ENCODE measurements at regions of chr11 and their contacts with region 1.

Region 1: DNA sequence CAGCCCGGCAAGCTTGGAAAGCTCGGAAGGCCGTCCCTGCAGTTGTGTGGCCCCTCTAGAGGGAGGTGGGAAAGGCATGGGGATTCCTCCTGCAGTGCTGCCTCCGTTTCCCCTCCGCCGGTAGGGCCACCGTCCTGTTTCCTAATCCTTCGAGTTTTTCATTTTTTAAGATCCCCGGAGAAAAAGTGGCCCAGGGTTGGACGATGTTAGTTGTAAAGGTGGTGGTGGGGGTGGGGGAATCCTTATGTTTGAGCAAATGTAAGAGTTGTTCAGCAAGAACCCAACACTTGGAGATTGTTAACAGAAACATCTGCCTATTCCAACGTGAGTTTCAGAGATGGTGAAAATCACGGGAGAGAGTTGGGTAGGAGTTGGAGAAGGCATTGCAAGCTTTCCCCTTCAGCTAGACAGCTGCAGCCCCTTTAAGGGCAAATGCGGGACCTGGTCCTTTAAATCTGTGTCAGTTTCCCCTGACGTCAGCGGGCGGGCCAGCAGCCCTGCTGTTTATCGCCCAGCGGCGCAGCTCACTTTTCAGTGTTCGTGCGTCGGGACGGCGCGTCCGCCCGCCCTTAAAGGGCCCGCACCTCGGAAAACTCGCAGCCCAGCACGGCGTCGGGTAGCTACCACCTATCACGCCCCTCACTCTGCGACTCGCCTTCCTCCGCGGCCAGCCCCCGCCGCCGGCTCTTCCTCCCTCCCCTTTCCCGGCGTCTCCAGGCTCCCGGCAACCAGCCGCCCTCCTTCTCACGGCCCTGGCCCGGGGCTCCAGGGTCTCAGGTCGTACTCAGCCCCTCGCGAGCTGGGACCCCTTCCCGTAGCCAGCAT is at the start of gene SIDT2:
- DNase-seq: peak; percentile 75
- ATAC-seq: peak; percentile 94
- H3K4me3 ChIP-seq: peak within 1 kb of the TSS; percentile 90
- H3K27ac ChIP-seq: peak within 1 kb of the TSS; percentile 73
- H3K4me1 ChIP-seq: peaks cover 15% of the 10 kb centered on the region
- H3K27me3 ChIP-seq: no peaks in the 10 kb centered on the region
- CTCF ChIP-seq: 0 out of 6 replicates have a peak, but pooled peaks of 1 of the 3 experiments have one; percentile 0
- EP300 ChIP-seq: peak in 1 of 2 experiments; percentile 41; a peak in 1 of 4 replicates
- POLR2A ChIP-seq: peak; percentile 79
- RAD21 ChIP-seq: no peak
- polyA plus RNA-seq, gene SIDT2: 4.9 to 5.7 TPM

Region 2: GRCh38 chr11:116787786-116788486 is 390.5 kb before region 1 on chr11 and contains the start of gene ZPR1:
- CTCF ChIA-PET with region 1: interaction called, 20 read pairs
- POLR2A ChIA-PET with region 1: interaction called, 3 read pairs
- RAD21 ChIA-PET with region 1: interaction called, 3 read pairs
- SMC1A ChIA-PET with region 1: interaction called, 3 read pairs
- in situ Hi-C with region 1: no loop called
- intact Hi-C with region 1: no loop called
- DNase-seq: no peak
- ATAC-seq: peak; percentile 86
- H3K4me3 ChIP-seq: peak within 1 kb of the TSS; percentile 96
- H3K27ac ChIP-seq: peak within 1 kb of the TSS; percentile 72
- H3K4me1 ChIP-seq: peaks cover 18% of the 10 kb centered on the region
- H3K27me3 ChIP-seq: no peaks in the 10 kb centered on the region
- CTCF ChIP-seq: no peak
- EP300 ChIP-seq: no peak
- POLR2A ChIP-seq: peak; percentile 96
- RAD21 ChIP-seq: no peak
- polyA plus RNA-seq, gene ZPR1: 9.3 to 20.4 TPM

Region 3: DNA sequence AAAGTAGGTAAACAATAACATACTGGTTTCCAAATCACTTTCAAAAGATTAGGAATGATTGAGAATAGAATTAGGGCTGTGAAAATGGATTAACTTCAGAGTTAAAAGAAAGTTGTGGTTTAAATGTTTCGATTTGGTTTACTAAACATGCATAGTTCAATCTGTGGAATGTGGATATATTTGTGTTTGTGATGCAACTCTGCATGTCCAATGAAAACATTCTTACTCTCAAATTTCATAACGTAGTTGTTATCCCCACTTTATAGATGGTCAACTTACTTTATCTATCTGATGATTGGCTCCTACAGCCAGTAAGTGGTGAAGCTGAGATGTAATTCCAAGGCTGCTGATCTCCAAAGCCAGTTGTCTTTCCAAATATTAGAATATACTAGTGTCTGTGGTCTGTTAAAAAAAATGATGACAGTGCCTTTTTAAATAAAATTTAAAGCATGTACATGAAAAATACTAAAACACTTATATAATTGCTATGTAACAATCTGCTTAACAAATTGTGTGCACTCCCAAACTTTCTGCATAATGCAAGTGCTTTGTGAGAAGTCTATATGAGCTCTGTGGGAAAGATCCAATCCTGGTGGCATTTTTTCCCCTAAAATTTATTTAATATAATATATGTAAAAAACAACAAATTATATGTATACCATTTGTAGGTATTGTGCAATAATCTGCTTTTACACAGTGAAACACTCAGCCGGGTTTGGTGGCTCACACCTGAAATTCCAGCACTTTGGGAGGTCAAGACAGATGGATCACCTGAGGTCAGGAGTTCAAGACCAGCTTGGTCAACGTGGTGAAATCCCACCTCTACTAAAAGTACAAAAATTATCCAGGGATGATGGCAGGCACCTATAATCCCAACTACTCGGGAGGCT is 70.5 kb before region 1 on chr11:
- CTCF ChIA-PET with region 1: interaction called, 9 read pairs
- POLR2A ChIA-PET with region 1: interaction called, 3 read pairs
- RAD21 ChIA-PET with region 1: no interaction called
- SMC1A ChIA-PET with region 1: interaction called, 12 read pairs
- in situ Hi-C with region 1: no loop called
- intact Hi-C with region 1: no loop called
- DNase-seq: no peak
- ATAC-seq: no peak
- H3K4me3 ChIP-seq: no peak overlapping the region
- H3K27ac ChIP-seq: no peak overlapping the region
- H3K4me1 ChIP-seq: no peaks in the 10 kb centered on the region
- H3K27me3 ChIP-seq: no peaks in the 10 kb centered on the region
- CTCF ChIP-seq: no peak
- EP300 ChIP-seq: no peak
- POLR2A ChIP-seq: no peak
- RAD21 ChIP-seq: no peak

Region 4: GRCh38 chr11:117160826-117161225 is 17.6 kb before region 1 on chr11:
- CTCF ChIA-PET with region 1: interaction called, 47 read pairs
- POLR2A ChIA-PET with region 1: interaction called, 5 read pairs
- RAD21 ChIA-PET with region 1: interaction called, 14 read pairs
- SMC1A ChIA-PET with region 1: interaction called, 14 read pairs
- in situ Hi-C with region 1: no loop called
- intact Hi-C with region 1: no loop called
- DNase-seq: no peak
- ATAC-seq: peak; percentile 81
- H3K4me3 ChIP-seq: no peak overlapping the region
- H3K27ac ChIP-seq: 0 out of 2 replicates have a peak overlapping the region, but pooled peaks have one; percentile 11
- H3K4me1 ChIP-seq: peaks cover 13% of the 10 kb centered on the region
- H3K27me3 ChIP-seq: no peaks in the 10 kb centered on the region
- CTCF ChIP-seq: no peak
- EP300 ChIP-seq: no peak
- POLR2A ChIP-seq: no peak
- RAD21 ChIP-seq: no peak

Region 5: GRCh38 chr11:117197516-117198456 is 19.4 kb after region 1 on chr11:
- CTCF ChIA-PET with region 1: interaction called, 16 read pairs
- POLR2A ChIA-PET with region 1: interaction called, 3 read pairs
- RAD21 ChIA-PET with region 1: interaction called, 8 read pairs
- SMC1A ChIA-PET with region 1: interaction called, 6 read pairs
- in situ Hi-C with region 1: no loop called
- intact Hi-C with region 1: no loop called
- DNase-seq: no peak
- ATAC-seq: 0 out of 3 replicates have a peak, but pooled peaks have one; percentile 15
- H3K4me3 ChIP-seq: no peak overlapping the region
- H3K27ac ChIP-seq: no peak overlapping the region
- H3K4me1 ChIP-seq: no peaks in the 10 kb centered on the region
- H3K27me3 ChIP-seq: no peaks in the 10 kb centered on the region
- CTCF ChIP-seq: peak; percentile 7 to 27 (median 27); a peak in 2 of 6 replicates
- EP300 ChIP-seq: no peak
- POLR2A ChIP-seq: no peak
- RAD21 ChIP-seq: no peak

Region 6: GRCh38 chr11:117232092-117232878 is 53.9 kb after region 1 on chr11 and contains the start of gene RNF214:
- CTCF ChIA-PET with region 1: interaction called, 422 read pairs
- POLR2A ChIA-PET with region 1: interaction called, 51 read pairs
- RAD21 ChIA-PET with region 1: interaction called, 159 read pairs
- SMC1A ChIA-PET with region 1: interaction called, 187 read pairs
- in situ Hi-C with region 1: no loop called
- intact Hi-C with region 1: no loop called
- DNase-seq: peak; percentile 20
- ATAC-seq: peak; percentile 82
- H3K4me3 ChIP-seq: peak within 1 kb of the TSS; percentile 89
- H3K27ac ChIP-seq: peak within 1 kb of the TSS; percentile 87
- H3K4me1 ChIP-seq: peaks cover 9% of the 10 kb centered on the region
- H3K27me3 ChIP-seq: no peaks in the 10 kb centered on the region
- CTCF ChIP-seq: peak; percentile 77 to 88 (median 85); a peak in 5 of 6 replicates
- EP300 ChIP-seq: no peak
- POLR2A ChIP-seq: peak; percentile 77
- RAD21 ChIP-seq: peak; percentile 31; the same call in 1 of the 2 replicates
- polyA plus RNA-seq, gene RNF214: 4.8 to 6.2 TPM